Endothelial cell of umbilical vein (primary cell): ENCODE measurements at regions of chr3 and their contacts with region 1.

Region 1: DNA sequence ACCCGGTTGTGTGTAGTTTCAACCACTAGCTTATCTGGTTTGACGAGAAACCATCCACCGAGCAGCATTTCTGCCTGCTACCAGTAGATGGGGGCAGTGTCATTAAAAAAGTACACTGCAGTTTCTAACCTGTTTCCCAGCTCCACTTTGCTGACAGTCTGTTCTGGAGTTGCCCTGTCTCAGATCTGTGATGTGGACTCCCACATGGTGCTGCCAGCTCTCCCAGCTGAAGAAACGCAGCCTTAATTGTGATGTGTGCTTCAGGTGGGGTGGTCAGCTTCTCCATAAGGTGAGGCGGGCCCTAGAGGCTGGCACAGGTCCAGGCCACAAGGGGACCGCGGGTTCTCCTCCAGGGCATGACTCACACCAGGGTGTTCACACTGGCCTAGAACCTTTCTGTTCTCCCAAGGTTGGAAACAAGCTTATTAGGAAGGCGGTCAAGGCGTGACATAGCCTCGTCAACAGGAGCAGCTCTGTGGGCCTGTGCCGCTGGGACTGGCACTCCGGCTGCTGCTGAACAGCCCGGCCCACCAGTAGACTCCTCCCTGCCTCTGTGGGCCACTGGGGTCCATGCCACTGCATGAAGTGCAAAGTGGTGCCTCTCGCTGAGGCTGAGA is 2.9 kb upstream of the FAM43A start:
- DNase-seq: peak; percentile 89
- H3K4me3 ChIP-seq: no peak overlapping the region
- H3K27ac ChIP-seq: peak overlapping the region; percentile 46
- H3K4me1 ChIP-seq: peaks cover 18% of the 10 kb centered on the region
- H3K27me3 ChIP-seq: no peaks in the 10 kb centered on the region
- CTCF ChIP-seq: peak; percentile 83 to 89
- POLR2A ChIP-seq: no peak

Region 2: DNA sequence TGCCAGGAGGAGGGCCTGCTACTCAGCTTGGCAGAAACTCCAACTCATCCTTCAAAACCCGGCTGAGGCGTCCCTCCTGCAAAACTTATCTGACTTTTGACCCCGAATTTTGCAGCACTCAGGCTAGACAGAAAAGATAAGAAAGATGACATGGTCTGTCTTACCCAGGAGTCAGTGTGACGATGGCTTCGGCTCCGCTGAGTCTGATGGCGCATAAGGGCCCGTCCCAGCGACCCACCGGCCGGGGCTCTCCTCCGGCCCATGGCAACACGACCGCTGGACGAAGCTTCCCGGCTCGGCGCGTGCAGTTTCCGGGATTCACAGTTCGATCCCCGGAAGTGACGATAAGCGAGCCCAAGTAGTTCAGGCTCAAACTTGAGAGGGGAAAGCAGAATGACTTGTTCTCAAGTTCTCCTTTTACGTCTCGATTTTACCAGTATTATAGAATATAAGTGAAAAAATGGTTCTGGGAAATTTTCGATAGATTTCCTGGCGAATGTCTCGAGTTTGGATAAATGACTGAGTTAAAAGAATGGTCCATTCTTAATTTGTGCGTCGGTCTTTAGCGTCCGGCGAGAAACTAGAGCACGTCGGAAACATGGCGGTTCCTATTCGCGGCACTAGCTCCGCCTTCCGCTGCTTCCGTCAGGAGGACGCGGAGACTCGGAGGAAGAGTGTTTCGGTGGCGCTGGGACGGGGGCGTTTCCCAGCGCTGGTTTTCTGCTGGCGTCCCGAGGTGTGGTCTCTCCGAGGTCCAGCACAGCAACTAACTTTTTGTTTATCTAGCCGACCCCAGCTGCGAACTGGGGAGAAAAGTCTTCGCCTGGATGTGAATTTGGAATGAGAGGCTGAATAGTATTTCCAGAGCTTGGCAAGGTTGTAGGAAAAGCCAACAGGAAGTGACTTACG is 10.6 kb before region 1 on chr3 and contains the start of gene LSG1:
- CTCF ChIA-PET with region 1: interaction called, 71 read pairs
- POLR2A ChIA-PET with region 1: interaction called, 18 read pairs
- dilution Hi-C with region 1: no loop called
- intact Hi-C with region 1: no loop called
- DNase-seq: peak; percentile 96
- H3K4me3 ChIP-seq: peak within 1 kb of the TSS; percentile 61 to 97 (median 64)
- H3K27ac ChIP-seq: peak within 1 kb of the TSS; percentile 93
- H3K4me1 ChIP-seq: peaks cover 15% of the 10 kb centered on the region
- H3K27me3 ChIP-seq: peaks cover 0 to 2% of the 10 kb centered on the region in 2 experiments
- CTCF ChIP-seq: no peak
- POLR2A ChIP-seq: peak; percentile 80
- total RNA-seq, gene LSG1: 48.3 and 52.7 TPM in 2 replicates

Region 3: DNA sequence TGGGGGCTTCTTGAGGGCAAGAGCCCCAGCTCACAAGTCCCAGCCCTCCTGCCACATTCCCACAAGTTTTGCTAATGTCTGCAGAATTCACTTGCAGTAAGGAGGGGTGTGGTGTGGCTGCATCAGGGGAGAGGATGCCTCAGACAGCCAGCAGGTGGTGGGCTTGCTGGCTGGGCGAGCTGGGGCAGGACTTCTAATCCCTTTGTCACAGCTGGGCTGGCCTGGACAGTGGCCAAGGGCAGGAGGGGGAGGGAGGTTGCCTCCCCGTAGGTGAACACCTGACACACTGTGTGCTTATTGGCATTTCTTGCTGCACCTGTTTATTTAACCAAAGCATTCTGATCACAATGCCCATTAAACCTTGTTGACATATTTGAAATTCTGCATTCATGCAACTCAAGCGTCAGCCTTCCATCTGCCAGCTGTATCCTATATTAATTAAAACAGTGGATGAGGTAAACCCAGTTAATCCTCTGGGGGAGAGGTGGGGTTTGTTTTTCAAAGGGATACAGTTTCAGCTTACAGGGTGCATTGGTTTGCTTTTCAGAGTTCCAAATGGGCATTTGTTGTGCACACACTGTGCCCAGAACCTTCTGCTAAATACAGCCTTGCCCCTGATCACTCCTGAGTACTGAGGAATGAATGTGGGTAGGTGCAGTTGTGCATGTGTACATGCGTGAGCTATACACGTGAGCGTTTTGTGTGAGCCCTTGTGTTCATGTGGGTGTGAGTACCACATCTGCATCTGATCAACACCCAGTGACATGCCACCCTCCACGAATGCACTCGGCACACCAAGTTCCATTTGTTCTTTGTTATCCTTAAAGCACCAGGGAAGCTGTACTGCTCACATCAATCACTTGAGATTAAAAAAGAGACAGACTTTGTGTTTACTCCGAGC is 319.4 kb after region 1 on chr3:
- CTCF ChIA-PET with region 1: interaction called, 10 read pairs
- POLR2A ChIA-PET with region 1: no interaction called
- dilution Hi-C with region 1: no loop called
- intact Hi-C with region 1: loop called (anchors 10 kb)
- DNase-seq: peak; percentile 80
- H3K4me3 ChIP-seq: no peak overlapping the region
- H3K27ac ChIP-seq: no peak overlapping the region
- H3K4me1 ChIP-seq: peaks cover 5% of the 10 kb centered on the region
- H3K27me3 ChIP-seq: no peaks in the 10 kb centered on the region
- CTCF ChIP-seq: peak; percentile 67 to 83
- POLR2A ChIP-seq: no peak

Region 4: DNA sequence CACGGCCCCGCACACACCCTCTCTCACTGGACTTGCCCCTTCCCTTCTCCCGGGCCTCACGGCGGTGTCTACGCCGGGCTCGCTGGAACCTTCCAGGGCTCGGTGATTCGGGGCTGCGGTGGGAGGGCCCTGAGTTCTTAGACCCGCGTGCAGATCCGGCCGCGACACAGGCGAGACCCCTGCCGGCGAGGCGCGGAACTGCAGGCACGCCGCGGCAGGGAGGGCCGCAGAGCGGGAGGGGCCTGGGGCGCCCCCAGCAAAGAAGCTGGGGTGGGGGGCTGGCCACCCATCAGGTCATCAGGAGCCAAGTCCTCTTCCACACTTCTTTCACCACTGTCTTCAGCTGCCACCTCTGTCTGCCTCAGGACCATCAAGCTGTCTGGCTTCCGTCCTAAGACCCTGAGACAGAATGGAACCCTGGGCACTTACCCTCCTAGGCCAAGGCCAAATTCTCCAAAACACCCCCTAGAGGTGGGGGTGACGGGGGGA is 423.7 kb after region 1 on chr3:
- CTCF ChIA-PET with region 1: interaction called, 66 read pairs
- POLR2A ChIA-PET with region 1: no interaction called
- dilution Hi-C with region 1: loop called (anchors 25 kb)
- intact Hi-C with region 1: loop called (anchors 1 kb)
- DNase-seq: peak; percentile 76
- H3K4me3 ChIP-seq: no peak overlapping the region
- H3K27ac ChIP-seq: peak overlapping the region; percentile 96
- H3K4me1 ChIP-seq: peaks cover 44% of the 10 kb centered on the region
- H3K27me3 ChIP-seq: no peaks in the 10 kb centered on the region
- CTCF ChIP-seq: peak; percentile 97 to 98
- POLR2A ChIP-seq: no peak

Region 5: GRCh38 chr3:195162033-195162669 is 479.3 kb after region 1 on chr3:
- CTCF ChIA-PET with region 1: interaction called, 15 read pairs
- POLR2A ChIA-PET with region 1: interaction called, 5 read pairs
- dilution Hi-C with region 1: no loop called
- intact Hi-C with region 1: loop called (anchors 1 kb)
- DNase-seq: peak; percentile 99
- H3K4me3 ChIP-seq: no peak overlapping the region
- H3K27ac ChIP-seq: peak overlapping the region; percentile 95
- H3K4me1 ChIP-seq: peaks cover 85% of the 10 kb centered on the region
- H3K27me3 ChIP-seq: no peaks in the 10 kb centered on the region
- CTCF ChIP-seq: no peak
- POLR2A ChIP-seq: peak; percentile 89

Region 6: DNA sequence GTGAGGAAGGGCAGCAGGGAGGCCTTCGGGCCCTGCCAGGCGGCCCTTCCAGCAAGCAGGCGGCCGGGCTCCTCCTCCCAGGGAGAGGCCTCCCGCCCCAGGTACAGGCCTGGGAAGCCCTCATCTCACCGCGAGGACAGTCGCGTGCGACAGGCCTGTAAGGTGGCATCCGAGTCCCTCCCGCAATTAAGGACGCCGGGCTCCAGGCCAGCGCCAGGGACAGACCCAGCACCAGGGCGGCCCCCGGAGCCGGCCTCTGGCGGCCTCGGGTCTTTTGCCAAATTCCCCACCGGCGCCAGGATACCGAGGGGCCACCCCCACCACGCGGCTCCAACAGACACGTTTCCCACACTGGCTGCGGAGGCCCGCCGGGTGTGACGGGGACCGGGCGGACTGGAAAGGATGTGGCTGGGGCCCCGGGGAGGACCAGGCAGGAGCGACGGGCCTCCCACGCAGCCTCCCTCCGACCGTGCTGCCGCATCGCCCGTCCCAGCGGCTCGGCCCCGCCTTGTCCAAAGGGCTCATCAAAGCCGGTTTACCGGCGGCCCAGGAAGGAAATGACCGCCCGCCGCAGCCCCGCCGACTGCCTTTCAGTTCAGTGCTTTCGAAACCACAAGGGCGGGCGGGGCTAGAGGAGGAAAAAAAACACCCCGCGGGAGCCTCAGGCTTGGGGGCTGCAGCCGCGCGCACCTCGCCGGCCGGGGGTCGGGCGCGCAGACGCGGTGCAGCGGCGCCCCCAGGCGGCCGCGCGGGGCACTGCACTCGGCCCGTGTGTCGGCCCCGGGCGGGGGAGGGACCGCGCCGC is 576.9 kb after region 1 on chr3:
- CTCF ChIA-PET with region 1: interaction called, 38 read pairs
- POLR2A ChIA-PET with region 1: interaction called, 4 read pairs
- dilution Hi-C with region 1: no loop called
- intact Hi-C with region 1: loop called (anchors 1 kb)
- DNase-seq: peak; percentile 96
- H3K4me3 ChIP-seq: peak overlapping the region in 1 of 3 experiments; percentile 70
- H3K27ac ChIP-seq: peak overlapping the region; percentile 98
- H3K4me1 ChIP-seq: peaks cover 55% of the 10 kb centered on the region
- H3K27me3 ChIP-seq: no peaks in the 10 kb centered on the region
- CTCF ChIP-seq: peak; percentile 44 to 88
- POLR2A ChIP-seq: peak; percentile 38